ENCODE measurements at regions of chr4 and their contacts with region 1.

Region 1: DNA sequence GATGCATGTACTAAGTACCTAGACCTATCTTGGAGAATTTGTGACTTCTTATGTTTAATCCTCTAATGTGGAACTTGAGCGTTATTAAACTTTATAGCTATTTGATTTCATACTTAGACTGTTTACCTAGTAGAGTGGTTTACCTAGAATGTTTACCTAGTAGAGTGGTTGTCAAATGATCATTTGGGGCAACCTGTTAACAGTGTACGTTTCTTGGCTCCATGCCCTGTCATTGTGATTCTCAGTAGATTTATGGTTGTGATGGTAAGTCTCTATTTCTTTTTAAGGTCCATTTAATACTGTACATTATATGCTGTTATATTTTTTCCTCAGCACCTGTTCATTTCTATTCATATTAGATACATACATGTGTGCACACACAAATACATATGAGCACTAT is 233.0 kb upstream of the MAD2L1 start:
- DNase-seq: no peak
- ATAC-seq: no peak
- H3K4me3 ChIP-seq: no peak overlapping the region
- H3K27ac ChIP-seq: no peak overlapping the region
- H3K4me1 ChIP-seq: no peaks in the 10 kb centered on the region
- H3K27me3 ChIP-seq: no peaks in the 10 kb centered on the region
- CTCF ChIP-seq: no peak

Region 2: DNA sequence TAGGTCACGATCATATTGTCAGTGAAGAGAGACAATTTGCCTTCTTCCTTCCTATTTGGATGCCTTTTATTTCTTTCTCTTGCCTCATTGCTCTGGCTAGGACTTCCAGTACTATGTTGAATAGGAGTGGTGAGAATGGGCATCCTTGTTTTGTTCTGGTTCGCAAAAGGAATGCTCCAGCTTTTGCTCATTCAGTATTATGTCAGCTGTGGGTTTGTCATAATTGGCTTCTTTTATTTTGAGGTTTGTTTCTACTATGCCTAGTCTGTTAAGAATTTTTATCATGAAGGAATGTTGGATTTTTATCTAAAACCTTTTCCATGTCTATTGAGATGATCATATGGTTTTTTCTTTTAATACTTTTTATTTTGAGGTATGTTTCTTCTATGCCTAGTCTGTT is 80.7 kb before region 1 on chr4:
- intact Hi-C with region 1: no loop called
- DNase-seq: no peak
- ATAC-seq: no peak
- H3K4me3 ChIP-seq: no peak overlapping the region
- H3K27ac ChIP-seq: no peak overlapping the region
- H3K4me1 ChIP-seq: no peaks in the 10 kb centered on the region
- H3K27me3 ChIP-seq: no peaks in the 10 kb centered on the region
- CTCF ChIP-seq: no peak

Region 3: GRCh38 chr4:120261117-120261516 is 38.5 kb before region 1 on chr4:
- intact Hi-C with region 1: loop called in 1 of 2 experiments (anchors 2 kb)
- DNase-seq: no peak
- ATAC-seq: no peak
- H3K4me3 ChIP-seq: no peak overlapping the region
- H3K27ac ChIP-seq: no peak overlapping the region
- H3K4me1 ChIP-seq: no peaks in the 10 kb centered on the region
- H3K27me3 ChIP-seq: no peaks in the 10 kb centered on the region
- CTCF ChIP-seq: no peak

Region 4: GRCh38 chr4:120277391-120277790 is 22.2 kb before region 1 on chr4:
- intact Hi-C with region 1: loop called in 1 of 2 experiments (anchors 2 kb)
- DNase-seq: no peak
- ATAC-seq: no peak
- H3K4me3 ChIP-seq: no peak overlapping the region
- H3K27ac ChIP-seq: no peak overlapping the region
- H3K4me1 ChIP-seq: no peaks in the 10 kb centered on the region
- H3K27me3 ChIP-seq: no peaks in the 10 kb centered on the region
- CTCF ChIP-seq: no peak

Region 5: DNA sequence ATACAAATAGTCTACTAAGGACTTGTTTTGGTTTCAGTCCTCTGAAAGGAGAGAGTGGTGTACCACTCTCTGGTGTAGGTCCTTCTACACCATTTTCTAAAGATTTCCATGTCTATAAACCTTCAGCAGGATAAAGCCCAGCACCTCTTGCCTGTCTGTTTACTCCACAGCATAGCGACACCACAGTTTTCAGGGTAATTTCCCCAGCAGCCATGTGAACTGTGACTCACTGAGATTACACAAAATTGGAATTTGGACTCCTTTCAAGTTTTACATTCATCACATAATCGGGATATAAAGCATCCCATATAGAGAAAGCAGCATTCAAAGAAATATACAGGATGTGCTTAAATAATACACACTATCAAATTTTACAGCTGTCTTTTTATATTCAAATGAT is 393.3 kb after region 1 on chr4:
- intact Hi-C with region 1: no loop called
- DNase-seq: no peak
- ATAC-seq: no peak
- H3K4me3 ChIP-seq: no peak overlapping the region
- H3K27ac ChIP-seq: no peak overlapping the region
- H3K4me1 ChIP-seq: no peaks in the 10 kb centered on the region
- H3K27me3 ChIP-seq: no peaks in the 10 kb centered on the region
- CTCF ChIP-seq: no peak